ENCODE measurements at regions of chr3 and their contacts with region 1.

Region 1: GRCh38 chr3:182470187-182470586 is 323.1 kb upstream of the ATP11B start:
- DNase-seq: no peak
- H3K4me3 ChIP-seq: no peak overlapping the region
- H3K27ac ChIP-seq: no peak overlapping the region
- H3K4me1 ChIP-seq: no peaks in the 10 kb centered on the region
- H3K27me3 ChIP-seq: no peaks in the 10 kb centered on the region
- CTCF ChIP-seq: no peak
- EP300 ChIP-seq: no peak
- POLR2A ChIP-seq: no peak

Region 2: GRCh38 chr3:181629029-181629428 is 841.2 kb before region 1 on chr3:
- in situ Hi-C with region 1: no loop called
- intact Hi-C with region 1: no loop called
- DNase-seq: no peak
- H3K4me3 ChIP-seq: no peak overlapping the region
- H3K27ac ChIP-seq: no peak overlapping the region
- H3K4me1 ChIP-seq: no peaks in the 10 kb centered on the region
- H3K27me3 ChIP-seq: no peaks in the 10 kb centered on the region
- CTCF ChIP-seq: no peak
- EP300 ChIP-seq: no peak
- POLR2A ChIP-seq: no peak

Region 3: DNA sequence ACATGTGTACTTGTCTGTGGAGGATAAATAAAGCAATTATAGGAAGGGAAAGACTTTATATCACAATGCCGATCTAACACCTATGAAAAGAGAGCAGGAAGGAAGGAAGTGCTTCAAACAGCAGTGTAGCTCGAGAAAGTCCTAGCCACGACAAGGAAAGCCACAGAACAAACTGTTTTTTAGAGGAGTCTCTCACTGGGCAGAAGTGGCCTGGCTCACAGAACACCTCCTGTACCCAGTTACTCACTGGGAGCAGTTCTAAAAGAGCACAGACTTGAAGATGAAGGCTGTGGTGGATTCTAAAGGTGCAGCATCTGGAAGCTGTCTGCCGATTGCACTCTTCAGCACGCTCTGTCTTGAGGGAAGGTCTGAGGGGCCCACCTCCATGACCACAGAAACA is 74.4 kb after region 1 on chr3:
- in situ Hi-C with region 1: no loop called
- intact Hi-C with region 1: loop called (anchors 2 kb)
- DNase-seq: no peak
- H3K4me3 ChIP-seq: no peak overlapping the region
- H3K27ac ChIP-seq: no peak overlapping the region
- H3K4me1 ChIP-seq: no peaks in the 10 kb centered on the region
- H3K27me3 ChIP-seq: no peaks in the 10 kb centered on the region
- CTCF ChIP-seq: no peak
- EP300 ChIP-seq: no peak
- POLR2A ChIP-seq: no peak

Measured in transverse colon (tissue), 4 donors.